Ascending aorta (tissue), 2 donors: ENCODE measurements at regions of chr1 and their contacts with region 1.

Region 1: GRCh38 chr1:47179017-47179987 is 10.5 kb downstream of the PDZK1IP1 start:
- DNase-seq: peak; percentile 36 to 96
- H3K4me3 ChIP-seq: peak overlapping the region; percentile 42 to 62
- H3K27ac ChIP-seq: peak overlapping the region in 1 of 2 donors; percentile 12
- H3K4me1 ChIP-seq: peaks cover 0 to 12% of the 10 kb centered on the region in 2 donors
- H3K27me3 ChIP-seq: no peaks in the 10 kb centered on the region
- CTCF ChIP-seq: peak; percentile 85 to 94 (median 89)

Region 2: GRCh38 chr1:47262787-47263413 is 83.6 kb after region 1 on chr1:
- intact Hi-C with region 1: loop called (anchors 1 kb)
- DNase-seq: no peak
- H3K4me3 ChIP-seq: no peak overlapping the region
- H3K27ac ChIP-seq: no peak overlapping the region
- H3K4me1 ChIP-seq: no peaks in the 10 kb centered on the region
- H3K27me3 ChIP-seq: no peaks in the 10 kb centered on the region
- CTCF ChIP-seq: peak; percentile 28 to 54 (median 40)

Region 3: DNA sequence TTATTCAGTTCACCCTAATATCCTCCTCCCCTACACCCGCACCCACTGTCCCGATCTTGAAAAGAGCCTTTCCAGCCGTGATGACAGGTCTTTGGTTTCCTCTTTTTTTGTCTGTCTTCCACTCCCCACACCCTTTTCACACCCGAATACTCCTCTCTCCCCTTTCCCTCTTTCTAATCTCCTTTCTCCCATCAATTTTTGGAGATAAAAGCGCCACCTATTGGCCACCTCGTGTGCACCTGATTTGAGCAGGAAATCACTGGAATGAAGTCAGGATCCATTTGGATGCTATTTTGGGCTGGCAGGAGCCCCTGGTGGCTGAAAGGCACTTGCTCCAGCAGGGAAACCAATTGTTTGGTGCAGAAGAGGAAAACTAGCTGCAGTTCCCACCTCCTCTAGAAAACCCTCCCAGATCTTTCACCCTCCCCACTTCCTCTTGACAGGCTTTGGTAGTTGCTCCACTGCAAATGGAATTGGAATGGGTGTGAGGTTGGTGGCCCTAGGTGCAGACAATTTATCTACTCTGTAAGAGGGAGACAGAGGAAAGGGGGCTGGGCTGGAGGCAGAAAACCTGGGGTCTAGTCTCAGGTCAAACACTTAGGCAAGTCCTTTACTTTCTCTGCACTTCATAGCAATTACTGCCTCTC is 245.2 kb after region 1 on chr1:
- intact Hi-C with region 1: loop called (anchors 5 kb)
- DNase-seq: no peak
- H3K4me3 ChIP-seq: no peak overlapping the region
- H3K27ac ChIP-seq: no peak overlapping the region
- H3K4me1 ChIP-seq: no peaks in the 10 kb centered on the region
- H3K27me3 ChIP-seq: no peaks in the 10 kb centered on the region
- CTCF ChIP-seq: peak; percentile 41 to 75 (median 65)